Body of pancreas (tissue), 4 donors: ENCODE measurements at regions of chr17 and their contacts with region 1.

Region 1: DNA sequence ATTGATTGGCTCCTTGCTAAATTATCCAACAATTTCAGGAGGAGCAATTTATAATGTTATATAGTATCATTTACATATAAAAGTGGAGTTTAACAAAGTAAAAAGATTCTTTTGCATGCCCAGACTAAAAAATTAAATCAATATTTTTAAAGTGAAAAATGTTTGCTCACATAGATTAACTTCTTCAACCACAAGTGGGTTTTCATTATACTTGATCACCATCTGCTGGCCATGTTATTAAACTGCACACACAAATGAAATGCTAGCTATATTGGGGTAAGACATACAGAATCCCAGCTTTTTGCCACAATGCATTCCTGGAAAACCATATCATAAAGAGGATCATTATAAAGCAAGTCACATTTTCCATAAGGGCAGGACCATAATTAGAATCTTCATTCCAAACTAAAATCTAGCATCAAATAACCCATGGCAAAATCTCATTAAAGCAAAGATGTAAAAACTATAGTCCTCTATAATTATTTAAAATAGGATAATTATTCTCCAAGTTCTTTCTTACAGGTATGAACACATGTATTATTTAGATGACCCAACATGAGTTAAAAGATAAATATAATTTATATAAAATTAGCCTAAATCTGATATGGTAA is 26.3 kb downstream of the CEP112 start:
- DNase-seq: peak in 1 of 4 donors; percentile 28
- ATAC-seq: no peak
- H3K4me3 ChIP-seq: no peak overlapping the region
- H3K27ac ChIP-seq: no peak overlapping the region
- H3K4me1 ChIP-seq: no peaks in the 10 kb centered on the region
- H3K27me3 ChIP-seq: no peaks in the 10 kb centered on the region
- CTCF ChIP-seq: peak in 6 of 7 experiments; percentile 52 to 81 (median 74)
- POLR2A ChIP-seq: no peak

Region 2: DNA sequence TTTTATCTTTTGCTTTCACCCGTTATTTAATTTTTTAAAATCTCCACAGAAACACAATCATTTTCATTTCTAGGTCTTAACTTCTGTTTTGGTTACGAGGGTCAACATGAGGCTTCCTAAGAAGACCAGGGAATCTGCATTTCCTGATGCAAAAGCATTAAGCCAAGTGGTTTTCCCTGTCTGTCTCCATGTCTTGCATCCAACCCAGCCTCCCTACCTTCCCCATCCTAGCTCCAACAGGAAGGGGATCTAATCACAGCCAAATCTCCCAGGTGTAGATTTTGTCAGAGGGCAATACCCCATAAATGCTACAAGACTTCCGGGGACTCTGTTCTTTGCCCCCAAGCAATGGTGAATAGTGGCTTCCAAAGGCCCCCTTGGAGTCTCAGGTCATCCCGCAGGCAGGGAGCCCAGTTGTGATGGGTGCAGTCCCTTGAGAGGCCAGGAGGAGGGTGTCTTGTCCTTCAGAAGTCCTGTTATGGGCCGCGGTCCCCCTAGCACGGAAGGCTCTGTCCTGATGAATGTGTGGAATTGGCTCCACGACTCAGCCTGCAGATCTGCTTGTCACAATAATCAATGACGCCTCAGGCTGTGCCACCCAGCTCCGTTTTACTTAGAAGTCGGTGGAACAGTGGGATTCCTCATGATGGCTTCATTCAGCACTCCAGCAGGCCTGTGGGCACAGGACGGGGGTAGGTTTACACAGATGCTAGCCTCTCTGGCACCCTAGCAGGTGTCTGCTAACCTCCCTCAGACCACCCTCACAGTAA is 887.4 kb before region 1 on chr17:
- intact Hi-C with region 1: loop called (anchors 5 kb)
- DNase-seq: peak; percentile 32 to 59 (median 56)
- ATAC-seq: peak; percentile 67
- H3K4me3 ChIP-seq: no peak overlapping the region
- H3K27ac ChIP-seq: no peak overlapping the region
- H3K4me1 ChIP-seq: no peaks in the 10 kb centered on the region
- H3K27me3 ChIP-seq: no peaks in the 10 kb centered on the region
- CTCF ChIP-seq: peak in 6 of 7 experiments; percentile 25 to 59 (median 54)
- POLR2A ChIP-seq: no peak

Region 3: GRCh38 chr17:66207936-66208335 is 42.3 kb after region 1 on chr17:
- intact Hi-C with region 1: no loop called
- DNase-seq: no peak
- ATAC-seq: no peak
- H3K4me3 ChIP-seq: no peak overlapping the region
- H3K27ac ChIP-seq: no peak overlapping the region
- H3K4me1 ChIP-seq: no peaks in the 10 kb centered on the region
- H3K27me3 ChIP-seq: no peaks in the 10 kb centered on the region
- CTCF ChIP-seq: no peak
- POLR2A ChIP-seq: no peak